Mammary epithelial cell (primary cell): ENCODE measurements at regions of chr7 and their contacts with region 1.

Region 1: GRCh38 chr7:40899651-40900507 is 765.1 kb downstream of the SUGCT start:
- DNase-seq: no peak
- H3K4me3 ChIP-seq: no peak overlapping the region
- H3K27ac ChIP-seq: no peak overlapping the region
- H3K4me1 ChIP-seq: no peaks in the 10 kb centered on the region
- H3K27me3 ChIP-seq: no peaks in the 10 kb centered on the region
- CTCF ChIP-seq: no peak

Region 2: GRCh38 chr7:40866604-40867003 is 33.3 kb before region 1 on chr7:
- CTCF ChIA-PET with region 1: no interaction called
- dilution Hi-C with region 1: loop called (anchors 5 kb)
- in situ Hi-C with region 1: no loop called
- intact Hi-C with region 1: no loop called
- DNase-seq: no peak
- H3K4me3 ChIP-seq: no peak overlapping the region
- H3K27ac ChIP-seq: no peak overlapping the region
- H3K4me1 ChIP-seq: no peaks in the 10 kb centered on the region
- H3K27me3 ChIP-seq: no peaks in the 10 kb centered on the region
- CTCF ChIP-seq: no peak

Region 3: GRCh38 chr7:40945788-40946187 is 45.9 kb after region 1 on chr7:
- CTCF ChIA-PET with region 1: no interaction called
- dilution Hi-C with region 1: no loop called
- in situ Hi-C with region 1: no loop called
- intact Hi-C with region 1: no loop called
- DNase-seq: peak; percentile 30
- H3K4me3 ChIP-seq: no peak overlapping the region
- H3K27ac ChIP-seq: no peak overlapping the region
- H3K4me1 ChIP-seq: peaks cover 8% of the 10 kb centered on the region
- H3K27me3 ChIP-seq: no peaks in the 10 kb centered on the region
- CTCF ChIP-seq: no peak